ENCODE measurements at regions of chr2 and their contacts with region 1.

Region 1: DNA sequence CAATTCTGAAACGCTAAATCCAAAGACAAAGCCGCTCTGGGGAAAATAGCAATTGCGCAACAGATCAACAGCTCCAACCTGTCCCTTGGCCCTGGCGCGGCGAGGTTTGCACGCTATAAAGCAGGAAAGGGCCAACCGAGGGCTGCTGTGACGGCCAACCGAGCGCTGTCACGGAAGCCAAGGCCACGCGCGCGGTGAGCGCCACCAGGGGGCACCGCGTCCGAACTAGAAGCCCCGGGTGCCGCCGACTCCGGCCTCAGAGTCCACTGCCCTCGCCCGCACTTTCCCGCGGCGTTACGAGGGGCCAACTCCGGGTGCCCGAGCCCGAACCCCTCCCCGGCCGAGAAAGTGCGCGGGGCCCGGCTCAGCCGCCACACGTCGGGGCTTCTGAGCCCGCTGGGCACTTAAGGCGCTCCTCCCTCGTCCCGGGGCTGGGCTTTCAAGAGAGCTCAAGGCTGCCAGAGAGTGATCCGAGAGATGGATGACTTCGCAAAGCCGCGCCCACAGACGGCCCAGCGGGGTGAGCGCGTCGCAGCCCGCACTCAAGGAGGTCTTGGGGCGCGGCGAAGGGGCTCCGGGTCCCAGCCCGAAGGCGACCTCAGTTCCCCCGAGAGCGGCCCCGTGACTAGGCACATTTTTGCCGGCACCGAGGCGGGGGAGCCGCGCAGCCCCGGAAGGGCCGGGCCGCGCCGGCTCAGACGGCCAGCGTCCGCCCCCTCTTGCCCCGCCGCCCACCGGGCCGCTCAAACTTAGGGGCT is 897 bp downstream of the NFE2L2 start:
- DNase-seq: peak; percentile 99
- ATAC-seq: peak; percentile 88

Region 2: GRCh38 chr2:177212106-177212890 is 51.3 kb before region 1 on chr2 and contains the start of gene HNRNPA3:
- intact Hi-C with region 1: loop called (anchors 1 kb)
- DNase-seq: peak; percentile 99
- ATAC-seq: peak; percentile 96
- total RNA-seq, gene HNRNPA3: 66.6 TPM

Region 3: DNA sequence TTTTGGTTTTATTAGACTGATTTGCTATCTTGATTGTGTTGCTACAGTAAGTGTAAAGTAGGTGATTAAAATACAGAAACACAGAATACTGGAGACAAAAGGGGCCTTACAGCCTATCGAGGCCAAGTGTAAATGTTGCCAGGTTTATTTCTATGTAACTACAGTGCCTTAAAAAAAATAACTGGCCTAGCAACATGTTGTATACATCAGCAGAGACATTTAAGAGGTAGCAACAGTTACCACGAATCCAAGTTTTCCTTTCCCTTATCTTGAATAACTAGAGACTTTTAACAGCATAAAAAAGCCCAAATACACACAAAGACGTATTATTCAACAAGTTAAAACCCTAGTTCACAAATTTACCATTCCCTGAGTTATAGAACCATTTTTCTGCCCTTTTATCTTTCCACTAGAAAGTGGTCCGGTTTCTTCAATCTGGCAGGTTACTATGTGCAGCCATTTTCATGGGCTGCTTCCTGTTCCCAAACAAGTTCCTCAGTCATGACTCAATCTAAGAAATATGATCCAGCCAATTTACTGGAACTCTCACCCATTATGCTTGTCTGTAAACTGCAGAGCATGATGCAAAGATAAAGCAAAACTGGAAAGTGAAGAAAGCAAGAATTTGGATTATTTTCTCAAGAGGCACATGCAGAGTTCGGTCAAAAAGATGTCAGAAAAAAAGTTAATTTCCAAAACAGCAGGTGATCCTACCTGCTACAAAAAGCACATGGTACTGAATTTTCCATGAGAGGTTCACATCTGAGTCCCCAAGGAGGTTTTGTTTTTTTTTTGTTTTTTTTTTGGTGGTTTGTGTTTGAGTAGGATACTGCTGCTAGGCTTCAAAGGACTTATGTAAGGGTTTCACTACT is 21.3 kb before region 1 on chr2:
- intact Hi-C with region 1: loop called (anchors 2 kb)
- DNase-seq: no peak
- ATAC-seq: peak; percentile 71

Region 4: GRCh38 chr2:177296040-177296439 is 32.4 kb after region 1 on chr2:
- intact Hi-C with region 1: loop called (anchors 1 kb)
- DNase-seq: no peak
- ATAC-seq: no peak

Region 5: GRCh38 chr2:177392373-177393202 is 129.0 kb after region 1 on chr2 and contains the start of gene AGPS:
- intact Hi-C with region 1: loop called (anchors 10 kb)
- DNase-seq: peak; percentile 95
- ATAC-seq: peak; percentile 96
- total RNA-seq, gene AGPS: 32.3 TPM

Measured in Right ventricle myocardium inferior (tissue), 1 donor.